ENCODE measurements at regions of chr1 and their contacts with region 1.

Region 1: GRCh38 chr1:22340873-22341272 is 110.8 kb upstream of the ZBTB40 start:
- DNase-seq: no peak
- ATAC-seq: no peak
- H3K4me3 ChIP-seq: no peak overlapping the region
- H3K27ac ChIP-seq: no peak overlapping the region
- H3K4me1 ChIP-seq: peaks cover 7% of the 10 kb centered on the region
- H3K27me3 ChIP-seq: peaks cover 9% of the 10 kb centered on the region; the same call in 1 of the 2 replicates
- CTCF ChIP-seq: no peak

Region 2: GRCh38 chr1:22370190-22370498 is 29.3 kb after region 1 on chr1:
- CTCF ChIA-PET with region 1: interaction called, 3 read pairs
- POLR2A ChIA-PET with region 1: interaction called, 30 read pairs
- intact Hi-C with region 1: no loop called
- DNase-seq: no peak
- ATAC-seq: no peak
- H3K4me3 ChIP-seq: no peak overlapping the region
- H3K27ac ChIP-seq: no peak overlapping the region
- H3K4me1 ChIP-seq: no peaks in the 10 kb centered on the region
- H3K27me3 ChIP-seq: peaks cover 27% of the 10 kb centered on the region
- CTCF ChIP-seq: no peak

Region 3: DNA sequence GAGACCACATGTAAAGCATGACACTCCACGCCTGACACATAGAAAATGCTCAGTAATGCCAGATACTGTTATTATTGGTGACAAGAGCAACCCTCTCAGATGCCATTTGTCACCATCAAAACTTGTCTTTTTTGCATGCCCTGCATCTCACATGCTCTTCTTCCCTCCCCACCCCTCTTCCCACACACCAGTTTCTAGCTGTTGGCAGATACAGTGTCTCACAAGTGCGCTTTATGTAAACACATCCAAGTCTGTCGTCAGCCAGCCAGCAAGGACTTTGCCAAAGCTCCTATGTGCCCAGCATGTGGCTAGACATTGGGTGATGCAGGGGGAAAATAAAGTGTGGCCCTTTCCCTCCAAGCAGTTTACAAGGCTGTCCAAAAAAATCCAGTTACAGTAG is 177.5 kb after region 1 on chr1:
- CTCF ChIA-PET with region 1: no interaction called
- POLR2A ChIA-PET with region 1: no interaction called
- intact Hi-C with region 1: no loop called
- DNase-seq: no peak
- ATAC-seq: no peak
- H3K4me3 ChIP-seq: no peak overlapping the region
- H3K27ac ChIP-seq: no peak overlapping the region
- H3K4me1 ChIP-seq: no peaks in the 10 kb centered on the region
- H3K27me3 ChIP-seq: no peaks in the 10 kb centered on the region
- CTCF ChIP-seq: no peak

Measured in PC-3 (cell line).